Mammary epithelial cell (primary cell): ENCODE measurements at regions of chr13 and their contacts with region 1.

Region 1: GRCh38 chr13:98653463-98653985 is 76.6 kb upstream of the STK24 start:
- DNase-seq: peak; percentile 76
- H3K4me3 ChIP-seq: no peak overlapping the region
- H3K27ac ChIP-seq: no peak overlapping the region
- H3K4me1 ChIP-seq: no peaks in the 10 kb centered on the region
- H3K27me3 ChIP-seq: no peaks in the 10 kb centered on the region
- CTCF ChIP-seq: peak; percentile 81 to 95

Region 2: GRCh38 chr13:98445340-98446233 is 207.9 kb before region 1 on chr13:
- CTCF ChIA-PET with region 1: no interaction called
- dilution Hi-C with region 1: loop called (anchors 5 kb)
- in situ Hi-C with region 1: loop called (anchors 10 kb)
- intact Hi-C with region 1: loop called (anchors 1 kb)
- DNase-seq: peak; percentile 50
- H3K4me3 ChIP-seq: no peak overlapping the region
- H3K27ac ChIP-seq: no peak overlapping the region
- H3K4me1 ChIP-seq: peaks cover 24% of the 10 kb centered on the region
- H3K27me3 ChIP-seq: no peaks in the 10 kb centered on the region
- CTCF ChIP-seq: peak; percentile 86 to 97

Region 3: DNA sequence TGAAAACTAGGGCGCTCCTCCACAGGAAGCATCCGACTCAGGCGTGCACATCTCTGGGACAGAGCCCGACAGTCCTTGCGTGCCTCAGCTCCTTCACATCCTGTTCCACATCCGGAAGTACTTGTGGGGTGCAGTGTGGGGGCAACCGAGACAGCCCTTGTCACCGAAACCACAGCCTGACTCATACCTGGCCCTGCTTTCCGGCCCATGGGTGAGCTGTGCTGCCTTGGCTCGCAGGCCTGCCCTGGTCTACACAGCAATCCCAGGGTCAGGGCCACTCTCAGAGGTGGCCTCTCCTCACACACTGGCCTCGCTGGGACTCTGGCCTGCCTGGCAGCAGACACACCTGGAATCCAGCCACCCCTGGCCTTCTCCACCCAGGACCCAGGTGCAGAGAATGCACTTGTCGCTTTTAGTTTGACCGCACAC is 177.0 kb before region 1 on chr13:
- CTCF ChIA-PET with region 1: interaction called, 5 read pairs
- dilution Hi-C with region 1: no loop called
- in situ Hi-C with region 1: loop called in 1 of 2 experiments (anchors 10 kb)
- intact Hi-C with region 1: no loop called
- DNase-seq: peak; percentile 90
- H3K4me3 ChIP-seq: no peak overlapping the region
- H3K27ac ChIP-seq: peak overlapping the region; percentile 63
- H3K4me1 ChIP-seq: peaks cover 31% of the 10 kb centered on the region
- H3K27me3 ChIP-seq: no peaks in the 10 kb centered on the region
- CTCF ChIP-seq: no peak

Region 4: GRCh38 chr13:98556968-98557631 is 96.4 kb before region 1 on chr13:
- CTCF ChIA-PET with region 1: no interaction called
- dilution Hi-C with region 1: no loop called
- in situ Hi-C with region 1: no loop called
- intact Hi-C with region 1: loop called (anchors 1 kb)
- DNase-seq: peak; percentile 76
- H3K4me3 ChIP-seq: no peak overlapping the region
- H3K27ac ChIP-seq: no peak overlapping the region
- H3K4me1 ChIP-seq: peaks cover 25% of the 10 kb centered on the region
- H3K27me3 ChIP-seq: no peaks in the 10 kb centered on the region
- CTCF ChIP-seq: peak; percentile 52 to 62

Region 5: GRCh38 chr13:98570929-98571372 is 82.6 kb before region 1 on chr13:
- CTCF ChIA-PET with region 1: no interaction called
- dilution Hi-C with region 1: no loop called
- in situ Hi-C with region 1: no loop called
- intact Hi-C with region 1: loop called (anchors 1 kb)
- DNase-seq: peak; percentile 81
- H3K4me3 ChIP-seq: peak overlapping the region; percentile 3 to 38 (median 32)
- H3K27ac ChIP-seq: peak overlapping the region; percentile 60
- H3K4me1 ChIP-seq: peaks cover 47% of the 10 kb centered on the region
- H3K27me3 ChIP-seq: no peaks in the 10 kb centered on the region
- CTCF ChIP-seq: no peak

Region 6: DNA sequence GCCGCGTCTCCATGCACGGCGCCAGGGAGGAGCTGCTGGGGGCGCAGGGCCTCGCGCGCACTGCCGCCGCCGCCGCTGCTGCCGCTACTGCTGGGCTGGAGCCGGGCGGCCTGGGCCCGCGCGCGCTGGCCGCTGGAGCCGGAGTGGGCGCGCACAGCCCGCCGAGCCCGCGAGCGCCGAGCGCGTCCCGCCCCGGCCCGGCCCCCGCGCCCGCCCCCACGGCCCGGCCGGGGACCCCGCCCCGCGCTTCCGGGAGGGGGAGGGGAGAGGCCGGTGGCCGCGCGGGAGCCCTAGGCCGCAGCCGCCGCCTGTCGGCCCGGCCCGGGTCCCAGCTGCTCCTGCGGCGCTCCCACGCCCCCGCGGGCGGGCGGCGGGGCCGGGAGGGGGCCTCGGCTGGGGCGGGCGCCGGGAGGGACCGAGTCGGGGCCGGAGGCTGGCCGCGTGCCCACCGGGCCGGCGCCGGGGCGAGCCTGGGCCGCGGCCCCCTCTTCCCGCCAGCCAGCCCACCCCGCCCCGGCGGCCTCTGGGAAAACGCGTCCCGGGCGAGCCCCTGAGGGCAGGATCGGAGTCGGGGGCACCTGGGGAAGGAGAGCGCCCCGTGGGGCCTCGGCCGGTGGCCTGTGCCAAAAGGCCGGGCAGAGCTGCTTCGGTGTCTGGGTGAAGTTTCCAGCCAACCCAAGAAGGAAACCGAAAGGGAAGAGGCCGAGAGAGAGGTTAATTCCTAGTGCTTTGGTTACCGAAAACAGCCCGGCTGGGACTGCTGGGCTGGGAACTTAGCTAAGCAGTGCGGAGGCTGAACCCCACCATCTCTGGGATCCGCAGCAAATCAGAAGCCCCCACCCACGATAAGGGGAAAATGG is 76.3 kb before region 1 on chr13 and contains the start of gene STK24:
- CTCF ChIA-PET with region 1: no interaction called
- dilution Hi-C with region 1: loop called (anchors 5 kb)
- in situ Hi-C with region 1: loop called in 1 of 2 experiments (anchors 10 kb)
- intact Hi-C with region 1: loop called (anchors 1 kb)
- DNase-seq: peak; percentile 66
- H3K4me3 ChIP-seq: peak within 1 kb of the TSS; percentile 64 to 95 (median 76)
- H3K27ac ChIP-seq: peak within 1 kb of the TSS; percentile 82
- H3K4me1 ChIP-seq: peaks cover 31% of the 10 kb centered on the region
- H3K27me3 ChIP-seq: no peaks in the 10 kb centered on the region
- CTCF ChIP-seq: no peak
- total RNA-seq, gene STK24: 114 to 189 TPM